ENCODE measurements at regions of chr12 and their contacts with region 1.

Region 1: GRCh38 chr12:9634177-9634803 is 26.6 kb upstream of the KLRB1 start:
- DNase-seq: peak; percentile 80
- H3K4me3 Mint-ChIP-seq: no peak overlapping the region
- H3K27ac Mint-ChIP-seq: no peak overlapping the region
- H3K4me1 Mint-ChIP-seq: peaks cover 50% of the 10 kb centered on the region
- H3K27me3 Mint-ChIP-seq: peaks cover 7% of the 10 kb centered on the region

Region 2: DNA sequence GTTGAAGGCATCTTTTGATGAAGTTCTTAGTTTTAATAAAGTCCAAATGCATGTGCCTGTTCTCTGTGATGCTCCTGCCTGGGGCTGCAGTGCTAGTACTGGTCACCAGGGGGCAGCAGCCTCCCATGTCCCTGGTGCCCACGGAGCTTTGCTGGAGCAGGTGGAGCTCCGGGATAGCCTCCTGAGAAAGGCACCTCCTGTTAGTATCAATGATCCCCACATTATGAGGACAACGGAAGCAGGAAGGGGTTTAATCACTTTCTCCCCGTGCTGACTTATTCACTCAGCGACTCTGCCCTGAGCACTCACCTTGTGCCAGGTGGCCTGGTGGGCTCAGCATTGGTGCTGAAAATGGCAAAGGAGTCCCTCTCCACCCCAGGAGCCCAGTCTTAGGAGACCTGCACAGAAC is 303.1 kb before region 1 on chr12:
- CTCF ChIA-PET with region 1: interaction called, 12 read pairs
- POLR2A ChIA-PET with region 1: no interaction called
- DNase-seq: peak; percentile 73
- H3K4me3 Mint-ChIP-seq: no peak overlapping the region
- H3K27ac Mint-ChIP-seq: no peak overlapping the region
- H3K4me1 Mint-ChIP-seq: peaks cover 14% of the 10 kb centered on the region
- H3K27me3 Mint-ChIP-seq: no peaks in the 10 kb centered on the region

Region 3: GRCh38 chr12:9707864-9708808 is 73.8 kb after region 1 on chr12:
- CTCF ChIA-PET with region 1: interaction called, 74 read pairs
- POLR2A ChIA-PET with region 1: interaction called, 7 read pairs
- DNase-seq: peak; percentile 74
- H3K4me3 Mint-ChIP-seq: peak overlapping the region; percentile 7
- H3K27ac Mint-ChIP-seq: peak overlapping the region; percentile 70
- H3K4me1 Mint-ChIP-seq: peaks cover 40% of the 10 kb centered on the region
- H3K27me3 Mint-ChIP-seq: no peaks in the 10 kb centered on the region

Measured in activated CD4-positive, alpha-beta memory T cell treated with anti-CD3 and anti-CD28 coated beads, Interleukin-2, amount 10 ng/mL, durations not matched to agents 7 days and 5 days (primary cell).